ENCODE measurements at regions of chr17 and their contacts with region 1.

Region 1: GRCh38 chr17:40362696-40363110 is 1.8 kb downstream of the GJD3 start:
- DNase-seq: peak; percentile 76 to 82 (median 80)
- ATAC-seq: peak; percentile 70
- H3K4me3 ChIP-seq: no peak overlapping the region
- H3K27ac ChIP-seq: no peak overlapping the region
- H3K4me1 ChIP-seq: peaks cover 18% of the 10 kb centered on the region
- H3K27me3 ChIP-seq: no peaks in the 10 kb centered on the region
- CTCF ChIP-seq: peak; percentile 41 to 70 (median 55)
- POLR2A ChIP-seq: peak in 2 of 3 donors; percentile 19 to 35

Region 2: DNA sequence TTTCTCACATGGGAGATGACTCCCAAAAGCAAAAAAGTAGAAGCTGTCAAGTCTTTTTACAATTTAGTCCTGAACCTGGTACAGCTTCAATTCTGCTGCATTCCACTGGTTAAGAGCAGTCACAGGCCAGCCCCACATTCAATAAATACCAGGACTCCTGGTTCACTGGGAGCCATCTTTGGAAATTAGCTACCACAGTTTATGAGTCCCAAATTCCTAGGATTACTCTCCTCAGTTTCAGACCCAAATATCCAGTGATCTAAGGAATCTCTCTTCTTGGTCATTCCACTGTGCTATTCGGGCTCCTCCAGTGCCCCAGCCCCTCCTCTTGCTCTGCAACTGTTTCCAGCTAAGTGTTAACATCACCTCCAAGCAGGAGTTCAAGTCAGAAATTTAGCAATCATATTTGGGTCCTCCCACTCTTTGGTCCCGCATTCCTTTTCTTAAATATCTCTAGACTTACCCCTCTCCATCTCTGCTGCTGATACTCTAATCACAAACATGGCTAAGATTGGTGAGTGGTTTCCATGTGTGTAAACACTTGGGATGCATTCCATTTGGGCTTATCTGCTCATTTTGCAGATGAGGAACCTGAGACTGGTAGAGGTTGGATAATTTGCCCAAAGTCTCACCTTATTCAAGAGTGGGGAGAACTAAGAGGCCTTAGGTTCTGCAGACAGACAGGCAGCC is 153.2 kb before region 1 on chr17:
- intact Hi-C with region 1: loop called (anchors 10 kb)
- DNase-seq: no peak
- ATAC-seq: no peak
- H3K4me3 ChIP-seq: no peak overlapping the region
- H3K27ac ChIP-seq: no peak overlapping the region
- H3K4me1 ChIP-seq: no peaks in the 10 kb centered on the region
- H3K27me3 ChIP-seq: no peaks in the 10 kb centered on the region
- CTCF ChIP-seq: no peak
- POLR2A ChIP-seq: no peak

Region 3: DNA sequence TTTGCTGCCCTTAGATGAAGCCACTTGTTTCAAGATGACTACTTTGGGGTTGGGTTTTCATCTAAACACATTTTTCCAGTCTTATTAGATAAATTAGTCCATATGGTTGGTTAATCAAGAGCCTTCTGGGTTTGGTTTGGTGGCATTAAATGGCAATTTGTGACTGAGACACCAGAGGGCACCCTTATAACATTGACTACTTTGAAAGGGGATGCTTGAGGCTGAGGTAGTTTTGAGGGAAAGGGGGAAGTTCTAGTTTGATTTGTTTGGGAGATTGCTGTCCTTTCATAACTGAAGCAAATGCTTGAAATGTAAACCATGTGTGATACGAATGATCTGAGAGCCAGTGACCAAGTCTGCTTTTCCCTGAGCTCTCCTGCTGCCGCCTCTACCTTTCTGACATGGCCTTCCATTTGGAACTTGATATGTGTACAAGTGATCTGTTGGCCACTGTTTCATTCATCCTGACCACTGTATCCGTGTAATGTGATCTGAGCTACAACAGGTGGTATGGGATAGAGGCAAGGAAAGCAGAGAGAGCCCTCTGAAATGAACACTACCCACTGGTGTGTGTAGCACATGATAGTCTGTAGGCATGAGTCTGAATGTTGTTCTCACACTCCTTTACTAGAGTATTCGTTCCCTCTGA is 59.6 kb before region 1 on chr17:
- intact Hi-C with region 1: no loop called
- DNase-seq: peak in 3 of 4 donors; percentile 64 to 72 (median 66)
- ATAC-seq: peak; percentile 70
- H3K4me3 ChIP-seq: no peak overlapping the region
- H3K27ac ChIP-seq: peak overlapping the region in 1 of 4 donors; percentile 15
- H3K4me1 ChIP-seq: no peaks in the 10 kb centered on the region
- H3K27me3 ChIP-seq: no peaks in the 10 kb centered on the region
- CTCF ChIP-seq: peak; percentile 43 to 91 (median 87)
- POLR2A ChIP-seq: no peak

Region 4: DNA sequence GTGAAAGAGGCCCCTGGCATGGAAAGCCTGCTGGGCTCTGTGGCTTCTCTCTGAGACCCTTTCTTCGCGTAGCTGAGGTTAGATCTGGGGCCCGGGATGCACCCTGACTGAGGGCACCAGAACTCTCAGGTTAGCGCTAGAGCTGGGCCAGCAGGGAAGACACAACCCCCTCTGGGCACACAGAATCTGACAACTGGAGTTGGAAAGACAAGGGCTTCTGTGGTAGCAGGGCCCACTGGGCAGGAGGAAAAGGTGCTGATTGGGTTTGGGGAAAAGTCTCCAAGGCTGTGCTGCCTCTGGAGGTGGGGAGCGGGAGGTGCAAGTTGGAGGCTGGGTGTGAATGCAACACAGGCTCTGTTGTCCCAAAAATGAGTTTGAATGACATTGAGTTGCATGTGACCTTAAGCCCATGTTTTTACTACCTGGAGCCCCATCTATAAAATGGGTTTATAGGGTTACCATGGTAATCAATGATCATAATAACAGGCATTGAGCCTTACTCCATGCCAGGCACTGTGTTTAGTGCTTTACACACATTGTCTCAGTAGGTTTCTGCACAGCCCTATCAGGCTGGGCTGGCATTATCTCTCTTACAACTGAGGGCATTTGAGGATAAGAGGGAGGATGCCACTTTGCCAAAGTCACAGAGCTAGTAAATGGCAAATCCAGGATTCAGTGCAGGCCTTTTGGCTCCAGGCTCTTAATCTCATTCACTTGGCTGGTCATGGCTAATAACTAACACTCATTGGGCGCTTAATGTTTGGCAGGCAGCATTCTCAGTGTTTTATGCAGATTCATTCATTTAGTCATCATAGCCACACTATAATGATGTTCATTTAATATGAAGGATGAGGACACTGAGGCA is 71.1 kb after region 1 on chr17:
- intact Hi-C with region 1: loop called (anchors 10 kb)
- DNase-seq: no peak
- ATAC-seq: no peak
- H3K4me3 ChIP-seq: no peak overlapping the region
- H3K27ac ChIP-seq: no peak overlapping the region
- H3K4me1 ChIP-seq: no peaks in the 10 kb centered on the region
- H3K27me3 ChIP-seq: no peaks in the 10 kb centered on the region
- CTCF ChIP-seq: peak in 4 of 7 experiments; percentile 13 to 32 (median 26)
- POLR2A ChIP-seq: no peak

Region 5: GRCh38 chr17:40526668-40527067 is 164.0 kb after region 1 on chr17:
- intact Hi-C with region 1: loop called (anchors 5 kb)
- DNase-seq: peak in 1 of 4 donors; percentile 44
- ATAC-seq: peak; percentile 52
- H3K4me3 ChIP-seq: no peak overlapping the region
- H3K27ac ChIP-seq: no peak overlapping the region
- H3K4me1 ChIP-seq: no peaks in the 10 kb centered on the region
- H3K27me3 ChIP-seq: no peaks in the 10 kb centered on the region
- CTCF ChIP-seq: no peak
- POLR2A ChIP-seq: no peak

Region 6: DNA sequence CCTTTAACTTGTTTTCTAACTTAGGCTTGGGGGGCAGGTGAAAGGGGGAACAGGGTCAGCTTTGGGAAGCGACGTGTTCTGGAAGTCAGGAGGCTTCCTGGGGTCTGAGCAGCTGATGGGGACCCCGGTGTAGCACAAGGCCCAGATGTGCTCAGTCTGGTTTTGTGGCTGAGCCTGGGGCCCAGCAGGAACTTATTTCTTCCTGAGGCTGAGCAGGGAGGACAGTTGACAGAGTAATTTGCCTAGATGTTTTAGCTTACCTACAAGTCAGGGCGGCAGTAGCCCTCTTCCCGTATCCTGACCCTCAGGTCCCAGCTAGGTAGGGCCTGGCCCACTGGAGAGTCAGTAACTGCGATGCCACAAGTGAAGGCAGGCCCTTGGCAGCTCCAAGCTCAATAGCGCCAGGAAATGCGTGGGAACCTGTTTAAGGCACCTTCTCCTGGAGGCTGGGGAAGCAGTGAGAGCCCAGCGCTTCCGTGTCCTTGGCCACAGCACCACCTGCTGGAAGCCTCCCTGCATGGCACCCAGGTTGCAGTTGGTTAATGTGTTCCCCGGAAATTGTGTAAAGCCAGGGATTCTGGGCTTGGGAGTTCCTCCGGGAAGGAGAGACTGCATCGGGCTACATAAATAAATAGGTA is 197.4 kb after region 1 on chr17:
- intact Hi-C with region 1: loop called (anchors 10 kb)
- DNase-seq: peak; percentile 90 to 92 (median 91)
- ATAC-seq: peak; percentile 95
- H3K4me3 ChIP-seq: no peak overlapping the region
- H3K27ac ChIP-seq: peak overlapping the region; percentile 13 to 50 (median 28)
- H3K4me1 ChIP-seq: peaks cover 8% of the 10 kb centered on the region
- H3K27me3 ChIP-seq: no peaks in the 10 kb centered on the region
- CTCF ChIP-seq: peak; percentile 93 to 99 (median 98)
- POLR2A ChIP-seq: no peak

Measured in body of pancreas (tissue), 4 donors.